Common myeloid progenitor, CD34-positive (primary cell): ENCODE measurements at regions of chr2 and their contacts with region 1.

Region 1: DNA sequence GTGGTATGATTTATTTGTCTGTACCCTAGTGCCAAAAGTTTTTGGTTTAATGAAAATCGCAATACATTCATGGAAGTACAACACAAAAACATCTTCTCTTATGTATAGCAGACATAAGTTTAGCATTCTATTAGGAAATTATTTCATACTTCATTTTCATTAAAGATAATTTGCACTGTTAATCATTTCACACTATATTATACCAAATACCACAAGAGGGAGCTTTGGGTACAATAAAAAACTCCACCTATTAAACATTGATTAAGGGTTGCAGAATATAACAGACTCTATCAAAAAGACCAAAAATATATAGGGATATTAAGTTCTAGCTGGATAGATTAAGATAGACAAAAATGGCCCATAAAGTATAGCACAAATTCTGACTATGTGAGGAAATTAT is 79.0 kb downstream of the SLC66A3 start:
- DNase-seq: peak; percentile 15 to 42 (median 30)
- H3K4me3 ChIP-seq: no peak overlapping the region
- H3K27ac ChIP-seq: no peak overlapping the region
- H3K4me1 ChIP-seq: peaks cover 0 to 4% (median 0%) of the 10 kb centered on the region in 4 experiments
- H3K27me3 ChIP-seq: no peaks in the 10 kb centered on the region

Region 2: DNA sequence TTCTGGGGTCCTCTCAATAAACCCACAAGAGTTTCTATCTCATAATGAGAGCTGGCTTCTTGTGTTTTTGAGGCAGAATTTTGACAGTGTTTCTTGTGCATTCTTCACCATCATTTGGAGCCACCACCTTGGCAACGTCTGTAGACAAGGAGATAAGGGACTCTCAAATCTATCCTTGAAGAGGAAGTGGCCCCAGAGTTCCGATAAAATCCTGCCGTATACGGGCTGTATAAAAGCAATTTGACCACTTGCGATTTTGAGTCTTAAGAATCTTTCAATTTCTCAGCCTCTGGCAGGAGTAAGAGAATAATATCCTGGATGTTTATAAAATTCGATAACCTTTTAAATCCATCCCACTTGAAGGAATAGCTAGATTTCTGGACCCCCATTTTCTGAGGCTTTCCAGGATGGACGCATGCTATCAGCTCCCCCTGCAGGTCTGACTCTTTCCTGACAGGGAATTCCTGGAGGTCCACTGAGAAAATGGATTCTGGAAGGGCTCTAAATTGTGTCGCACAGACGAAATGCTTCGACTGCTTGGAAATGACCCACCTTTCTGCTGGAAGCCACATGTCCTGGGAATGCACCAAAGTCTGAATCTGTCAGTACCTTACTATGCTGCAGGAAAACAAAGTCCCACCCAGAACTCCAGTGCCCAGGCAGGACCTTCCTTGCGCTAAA is 177.6 kb after region 1 on chr2:
- CTCF ChIA-PET with region 1: interaction called, 15 read pairs
- POLR2A ChIA-PET with region 1: no interaction called
- DNase-seq: peak; percentile 23 to 47 (median 35)
- H3K4me3 ChIP-seq: peak overlapping the region in 6 of 7 experiments; percentile 20 to 74 (median 34)
- H3K27ac ChIP-seq: no peak overlapping the region
- H3K4me1 ChIP-seq: peaks cover 0 to 2% (median 0%) of the 10 kb centered on the region in 4 experiments
- H3K27me3 ChIP-seq: no peaks in the 10 kb centered on the region